Left cardiac atrium (tissue), 4 donors: ENCODE measurements at regions of chr3 and their contacts with region 1.

Region 1: GRCh38 chr3:193572426-193572908 is 17.8 kb upstream of the ATP13A4 start:
- DNase-seq: peak; percentile 30
- ATAC-seq: peak; percentile 71 to 80

Region 2: GRCh38 chr3:193190146-193190786 is 382.2 kb before region 1 on chr3:
- intact Hi-C with region 1: loop called in 1 of 2 experiments (anchors 5 kb)
- DNase-seq: no peak
- ATAC-seq: peak in 1 of 2 donors; percentile 43

Region 3: DNA sequence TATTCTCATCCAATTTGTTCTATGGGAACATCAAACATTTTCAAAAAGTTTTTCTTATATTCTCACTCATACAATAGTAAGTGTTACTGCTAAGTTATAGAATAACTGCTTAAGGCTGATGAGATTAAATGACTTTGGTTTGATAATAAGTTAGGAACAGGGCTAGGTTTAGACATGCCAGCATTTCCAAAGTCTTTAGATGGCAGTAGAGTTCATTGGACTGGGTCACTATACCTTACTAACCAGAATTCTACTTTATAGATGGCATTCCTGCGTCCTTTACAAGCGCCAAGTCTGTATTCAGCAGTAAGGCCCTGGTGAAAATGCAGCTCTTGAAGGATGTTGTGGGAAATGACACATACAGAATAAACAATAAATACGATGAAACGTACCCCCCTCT is 309.8 kb before region 1 on chr3:
- intact Hi-C with region 1: no loop called
- DNase-seq: no peak
- ATAC-seq: no peak

Region 4: GRCh38 chr3:193465992-193466608 is 106.4 kb before region 1 on chr3:
- intact Hi-C with region 1: loop called (anchors 5 to 10 kb)
- DNase-seq: no peak
- ATAC-seq: no peak

Region 5: DNA sequence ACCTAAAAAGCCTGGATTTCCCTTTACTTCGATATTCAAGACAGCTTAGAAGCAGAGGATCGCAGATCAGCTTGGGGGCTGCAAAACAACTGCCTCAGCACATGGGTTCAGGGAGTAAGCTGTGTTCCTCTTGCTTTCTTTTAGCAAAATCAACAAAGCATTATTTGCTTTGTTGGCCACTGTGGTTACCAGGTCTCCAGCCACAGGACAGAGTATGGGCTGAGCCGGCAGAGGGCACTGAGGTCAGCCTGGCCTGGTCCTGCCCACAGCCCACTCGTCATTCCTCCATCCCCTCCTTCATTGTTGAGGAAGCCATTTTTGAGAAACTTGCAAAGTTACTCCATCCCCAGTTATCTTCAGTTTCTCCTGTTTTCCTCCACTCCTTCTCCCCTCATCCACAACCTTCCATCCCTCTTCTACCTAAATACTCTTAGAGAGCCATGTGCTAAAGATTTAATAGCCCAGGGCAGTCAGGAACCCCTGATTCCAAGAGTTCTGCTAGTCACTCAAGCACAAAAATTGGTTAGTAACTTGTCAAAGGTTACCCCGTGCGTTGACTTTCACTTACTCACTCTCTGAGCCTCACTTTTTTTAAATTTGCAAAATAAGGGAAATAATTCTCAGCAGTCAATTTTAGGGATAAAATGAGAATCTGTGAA is 503.5 kb after region 1 on chr3:
- intact Hi-C with region 1: no loop called
- DNase-seq: no peak
- ATAC-seq: no peak